ENCODE measurements at regions of chr3 and their contacts with region 1.

Region 1: DNA sequence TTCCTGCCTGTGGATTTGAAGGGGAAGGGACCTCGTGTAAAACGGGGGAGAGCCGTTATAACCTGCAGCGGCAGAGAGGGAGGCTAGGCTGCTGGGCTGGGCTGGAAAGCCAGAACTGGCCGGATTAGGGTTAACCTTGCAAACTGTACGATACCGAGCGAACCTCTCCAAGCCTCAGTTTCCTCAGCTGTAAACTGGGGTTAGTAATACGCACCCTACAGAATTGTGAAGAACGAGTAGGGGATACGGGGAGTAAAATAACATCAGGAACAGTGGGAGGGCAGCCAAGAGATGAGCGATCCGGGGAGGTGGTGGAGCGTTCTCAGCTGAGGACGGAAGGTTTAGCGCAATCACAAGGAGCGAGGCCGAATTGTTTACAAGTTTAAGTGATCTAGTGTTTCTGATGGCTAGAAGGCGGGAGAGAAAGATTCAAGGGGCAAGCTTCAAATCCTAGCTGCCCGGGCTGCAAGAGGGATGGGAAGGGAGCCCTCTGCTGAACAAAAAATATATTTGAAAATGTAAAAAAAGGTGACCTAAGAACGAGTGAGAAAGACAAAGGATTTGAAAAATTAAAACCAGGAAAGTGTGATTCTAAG is 768 bp upstream of the SEMA5B start:
- DNase-seq: peak; percentile 37 to 46
- H3K4me3 ChIP-seq: peak overlapping the region; percentile 58
- H3K27ac ChIP-seq: no peak overlapping the region
- H3K4me1 ChIP-seq: peaks cover 4% of the 10 kb centered on the region
- H3K27me3 ChIP-seq: peaks cover 55% of the 10 kb centered on the region
- CTCF ChIP-seq: peak; percentile 67

Region 2: GRCh38 chr3:121126033-121126706 is 1902.2 kb before region 1 on chr3:
- CTCF ChIA-PET with region 1: interaction called, 11 read pairs
- POLR2A ChIA-PET with region 1: no interaction called
- intact Hi-C with region 1: no loop called
- DNase-seq: no peak
- H3K4me3 ChIP-seq: no peak overlapping the region
- H3K27ac ChIP-seq: no peak overlapping the region
- H3K4me1 ChIP-seq: no peaks in the 10 kb centered on the region
- H3K27me3 ChIP-seq: no peaks in the 10 kb centered on the region
- CTCF ChIP-seq: no peak

Region 3: GRCh38 chr3:122392868-122393844 is 635.2 kb before region 1 on chr3:
- CTCF ChIA-PET with region 1: no interaction called
- POLR2A ChIA-PET with region 1: no interaction called
- intact Hi-C with region 1: loop called (anchors 1 kb)
- DNase-seq: peak in 1 of 2 experiments; percentile 9
- H3K4me3 ChIP-seq: no peak overlapping the region
- H3K27ac ChIP-seq: no peak overlapping the region
- H3K4me1 ChIP-seq: no peaks in the 10 kb centered on the region
- H3K27me3 ChIP-seq: no peaks in the 10 kb centered on the region
- CTCF ChIP-seq: peak; percentile 91

Region 4: DNA sequence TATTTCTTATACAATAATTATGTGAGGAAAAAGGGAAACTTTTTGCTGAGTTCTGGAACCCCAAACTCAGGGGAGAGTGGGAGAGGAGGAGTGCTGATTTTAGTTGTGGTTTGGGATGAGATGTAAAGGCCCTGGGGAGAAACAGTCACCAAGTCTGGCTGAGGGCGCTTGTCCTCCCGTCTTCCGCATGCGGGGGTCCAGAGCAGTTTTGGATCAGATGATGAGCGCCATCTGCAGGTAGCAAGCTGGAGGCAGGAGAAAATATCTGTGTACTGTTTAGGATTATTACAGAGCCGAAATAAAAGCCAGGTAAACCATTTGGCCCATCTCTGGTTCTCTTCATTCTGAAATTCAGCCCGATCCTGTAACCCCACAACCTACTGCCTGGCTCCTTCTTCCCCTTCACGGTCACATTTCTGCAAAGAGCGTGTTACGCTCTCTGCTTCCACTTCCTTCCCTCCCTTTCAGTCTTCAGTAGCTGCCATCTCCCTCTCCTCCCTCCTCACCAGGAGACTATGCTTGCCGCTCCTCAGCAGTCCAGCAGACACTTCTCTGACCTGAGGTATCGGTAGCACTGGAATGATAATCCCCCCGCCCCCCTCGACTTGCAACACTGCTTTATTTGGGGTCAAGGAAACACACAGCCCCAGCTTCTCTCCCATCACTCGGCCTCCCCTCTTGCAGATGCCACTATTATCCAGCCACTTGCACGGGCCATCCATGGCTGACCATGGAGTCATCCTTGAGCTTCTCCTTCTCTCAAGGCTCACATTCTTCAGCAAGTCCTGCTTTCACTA is 349.0 kb before region 1 on chr3:
- CTCF ChIA-PET with region 1: no interaction called
- POLR2A ChIA-PET with region 1: interaction called, 5 read pairs
- intact Hi-C with region 1: loop called (anchors 5 kb)
- DNase-seq: peak in 1 of 2 experiments; percentile 80
- H3K4me3 ChIP-seq: peak overlapping the region; percentile 91; the same call in 1 of the 2 replicates
- H3K27ac ChIP-seq: no peak overlapping the region
- H3K4me1 ChIP-seq: peaks cover 24% of the 10 kb centered on the region
- H3K27me3 ChIP-seq: no peaks in the 10 kb centered on the region
- CTCF ChIP-seq: peak; percentile 84

Region 5: DNA sequence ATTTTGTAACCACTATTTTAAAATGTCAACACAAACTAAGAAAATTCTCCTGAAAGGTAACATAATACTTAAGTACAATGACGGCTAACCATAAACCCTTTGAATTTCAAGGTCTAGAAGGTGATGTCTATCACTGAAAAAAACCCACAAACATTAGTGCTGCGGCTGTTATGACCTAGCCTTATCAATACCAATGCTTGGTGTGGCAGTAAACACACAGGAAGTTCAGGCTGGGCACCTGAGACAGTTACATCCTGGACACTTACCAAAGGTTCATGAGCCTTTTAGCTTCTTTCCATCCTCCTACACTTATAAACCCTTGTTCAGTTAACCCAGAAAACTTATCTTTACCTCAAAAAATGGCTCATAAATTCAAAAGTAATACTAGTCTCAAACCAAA is 240.5 kb before region 1 on chr3:
- CTCF ChIA-PET with region 1: no interaction called
- POLR2A ChIA-PET with region 1: interaction called, 16 read pairs
- intact Hi-C with region 1: no loop called
- DNase-seq: no peak
- H3K4me3 ChIP-seq: no peak overlapping the region
- H3K27ac ChIP-seq: no peak overlapping the region
- H3K4me1 ChIP-seq: peaks cover 25% of the 10 kb centered on the region
- H3K27me3 ChIP-seq: no peaks in the 10 kb centered on the region
- CTCF ChIP-seq: no peak

Region 6: GRCh38 chr3:122942937-122943827 is 85.1 kb before region 1 on chr3:
- CTCF ChIA-PET with region 1: interaction called, 14 read pairs
- POLR2A ChIA-PET with region 1: no interaction called
- intact Hi-C with region 1: loop called (anchors 1 kb)
- DNase-seq: peak; percentile 64 to 83
- H3K4me3 ChIP-seq: no peak overlapping the region
- H3K27ac ChIP-seq: no peak overlapping the region
- H3K4me1 ChIP-seq: peaks cover 34% of the 10 kb centered on the region
- H3K27me3 ChIP-seq: no peaks in the 10 kb centered on the region
- CTCF ChIP-seq: peak; percentile 94

Region 7: DNA sequence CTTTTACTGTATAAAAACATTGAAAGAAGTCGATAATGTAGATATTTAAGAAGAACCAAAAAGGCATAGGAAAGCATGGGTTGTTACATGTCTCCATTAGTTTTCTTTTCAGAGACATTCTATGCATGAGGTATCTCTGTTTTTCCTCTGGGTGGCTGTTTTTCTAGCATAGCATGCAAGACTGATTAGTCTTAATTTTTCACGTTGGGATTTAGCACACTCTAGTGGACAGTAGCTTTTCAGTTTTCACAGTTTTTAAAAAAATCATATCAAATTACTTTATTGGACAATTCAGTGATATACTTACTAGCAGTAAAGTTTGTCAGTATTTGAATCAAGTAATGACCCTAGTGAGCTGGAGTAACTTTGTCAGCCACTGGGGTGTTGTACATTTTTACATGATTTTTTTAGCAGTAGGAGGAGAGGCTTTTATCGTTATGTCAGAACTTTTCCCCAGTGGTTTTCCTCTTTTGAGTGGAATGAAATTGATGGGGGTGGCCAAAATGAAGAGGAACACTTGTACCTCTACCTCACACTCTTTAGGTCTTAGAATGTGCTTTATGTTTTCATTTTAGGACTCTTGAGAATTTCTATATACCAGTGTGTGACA is 230.6 kb after region 1 on chr3:
- CTCF ChIA-PET with region 1: no interaction called
- POLR2A ChIA-PET with region 1: no interaction called
- intact Hi-C with region 1: loop called (anchors 5 kb)
- DNase-seq: peak in 1 of 2 experiments; percentile 57
- H3K4me3 ChIP-seq: no peak overlapping the region
- H3K27ac ChIP-seq: no peak overlapping the region
- H3K4me1 ChIP-seq: no peaks in the 10 kb centered on the region
- H3K27me3 ChIP-seq: no peaks in the 10 kb centered on the region
- CTCF ChIP-seq: peak; percentile 77